Right cardiac atrium (tissue), 5 donors: ENCODE measurements at regions of chr1 and their contacts with region 1.

Region 1: GRCh38 chr1:35715568-35716002 is 3.1 kb downstream of the C1orf216 start:
- DNase-seq: peak; percentile 68 to 87 (median 86)
- ATAC-seq: peak; percentile 30 to 45
- H3K4me3 ChIP-seq: no peak overlapping the region
- H3K27ac ChIP-seq: no peak overlapping the region
- H3K4me1 ChIP-seq: peaks cover 2% of the 10 kb centered on the region
- H3K27me3 ChIP-seq: no peaks in the 10 kb centered on the region

Region 2: DNA sequence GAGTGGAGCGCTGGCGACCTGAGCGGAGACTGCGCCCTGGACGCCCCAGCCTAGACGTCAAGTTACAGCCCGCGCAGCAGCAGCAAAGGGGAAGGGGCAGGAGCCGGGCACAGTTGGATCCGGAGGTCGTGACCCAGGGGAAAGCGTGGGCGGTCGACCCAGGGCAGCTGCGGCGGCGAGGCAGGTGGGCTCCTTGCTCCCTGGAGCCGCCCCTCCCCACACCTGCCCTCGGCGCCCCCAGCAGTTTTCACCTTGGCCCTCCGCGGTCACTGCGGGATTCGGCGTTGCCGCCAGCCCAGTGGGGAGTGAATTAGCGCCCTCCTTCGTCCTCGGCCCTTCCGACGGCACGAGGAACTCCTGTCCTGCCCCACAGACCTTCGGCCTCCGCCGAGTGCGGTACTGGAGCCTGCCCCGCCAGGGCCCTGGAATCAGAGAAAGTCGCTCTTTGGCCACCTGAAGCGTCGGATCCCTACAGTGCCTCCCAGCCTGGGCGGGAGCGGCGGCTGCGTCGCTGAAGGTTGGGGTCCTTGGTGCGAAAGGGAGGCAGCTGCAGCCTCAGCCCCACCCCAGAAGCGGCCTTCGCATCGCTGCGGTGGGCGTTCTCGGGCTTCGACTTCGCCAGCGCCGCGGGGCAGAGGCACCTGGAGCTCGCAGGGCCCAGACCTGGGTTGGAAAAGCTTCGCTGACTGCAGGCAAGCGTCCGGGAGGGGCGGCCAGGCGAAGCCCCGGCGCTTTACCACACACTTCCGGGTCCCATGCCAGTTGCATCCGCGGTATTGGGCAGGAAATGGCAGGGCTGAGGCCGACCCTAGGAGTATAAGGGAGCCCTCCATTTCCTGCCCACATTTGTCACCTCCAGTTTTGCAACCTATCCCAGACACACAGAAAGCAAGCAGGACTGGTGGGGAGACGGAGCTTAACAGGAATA is 138.2 kb before region 1 on chr1:
- intact Hi-C with region 1: loop called in 1 of 4 experiments (anchors 5 kb)
- DNase-seq: peak; percentile 49 to 80 (median 76)
- ATAC-seq: peak; percentile 47 to 66
- H3K4me3 ChIP-seq: peak overlapping the region; percentile 55
- H3K27ac ChIP-seq: no peak overlapping the region
- H3K4me1 ChIP-seq: peaks cover 4% of the 10 kb centered on the region
- H3K27me3 ChIP-seq: no peaks in the 10 kb centered on the region

Region 3: DNA sequence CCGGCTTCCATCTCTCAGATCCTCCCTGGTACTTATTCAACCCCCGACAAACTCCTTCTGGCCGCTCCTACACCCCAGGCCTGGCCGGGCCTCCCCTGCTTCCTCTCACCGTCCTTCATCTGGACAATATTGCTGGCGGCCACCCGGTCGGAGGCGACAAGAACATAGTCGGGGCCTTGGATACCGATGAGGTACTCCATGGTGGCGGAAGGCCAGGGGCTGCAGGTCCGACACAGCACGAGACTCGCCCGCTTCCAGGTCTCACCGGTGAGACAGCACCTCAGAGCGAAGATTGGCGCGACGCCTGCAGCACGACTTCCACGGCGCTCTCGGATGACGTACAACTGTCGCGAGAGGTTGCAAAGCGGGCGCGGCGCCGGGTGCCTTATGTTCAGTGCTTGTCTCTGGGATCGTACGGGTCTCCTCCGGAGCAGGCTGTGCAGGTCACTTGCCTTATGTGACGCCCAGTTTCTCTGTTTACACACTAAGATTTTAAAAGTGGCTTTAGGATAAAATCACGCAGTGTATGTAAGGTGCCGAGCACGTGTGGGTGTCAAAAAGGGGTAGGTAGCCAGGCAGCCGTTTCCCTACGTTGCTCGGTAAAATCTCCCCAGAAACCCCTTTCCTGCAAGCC is 74.2 kb before region 1 on chr1 and contains the start of gene PSMB2:
- intact Hi-C with region 1: loop called in 1 of 4 experiments (anchors 10 kb)
- DNase-seq: peak; percentile 95 to 98 (median 98)
- ATAC-seq: peak; percentile 97 to 98
- H3K4me3 ChIP-seq: peak within 1 kb of the TSS; percentile 91
- H3K27ac ChIP-seq: peak within 1 kb of the TSS; percentile 96
- H3K4me1 ChIP-seq: peaks cover 3% of the 10 kb centered on the region
- H3K27me3 ChIP-seq: no peaks in the 10 kb centered on the region
- total RNA-seq, gene PSMB2: 32.0 to 37.3 (median 35.7) TPM